ENCODE measurements at regions of chr17 and their contacts with region 1.

Region 1: DNA sequence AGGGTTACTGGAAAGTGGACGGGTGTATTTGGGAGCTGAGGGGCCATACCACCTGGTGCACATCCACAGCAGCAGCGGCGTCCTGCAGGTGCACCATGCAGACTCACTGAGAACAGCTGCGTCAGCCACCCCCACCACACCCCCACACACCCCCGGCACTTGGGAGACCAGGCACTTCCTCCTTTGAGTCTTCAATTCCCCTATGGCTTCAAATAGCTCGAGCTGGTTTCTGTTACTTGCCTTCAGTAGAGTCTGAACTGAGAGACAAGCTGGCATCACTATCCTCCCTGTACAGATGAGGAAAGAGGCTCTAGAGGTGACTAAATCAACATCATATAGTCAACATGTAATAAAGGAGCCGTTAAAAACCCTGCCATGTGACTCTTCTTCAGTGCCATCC is 15.4 kb downstream of the CUEDC1 start:
- DNase-seq: peak; percentile 68
- ATAC-seq: peak; percentile 94
- H3K4me3 Mint-ChIP-seq: peak overlapping the region; percentile 50
- H3K27ac Mint-ChIP-seq: peak overlapping the region; percentile 35
- H3K4me1 Mint-ChIP-seq: peaks cover 34% of the 10 kb centered on the region
- H3K27me3 Mint-ChIP-seq: peaks cover 47% of the 10 kb centered on the region
- CTCF ChIP-seq: no peak

Region 2: DNA sequence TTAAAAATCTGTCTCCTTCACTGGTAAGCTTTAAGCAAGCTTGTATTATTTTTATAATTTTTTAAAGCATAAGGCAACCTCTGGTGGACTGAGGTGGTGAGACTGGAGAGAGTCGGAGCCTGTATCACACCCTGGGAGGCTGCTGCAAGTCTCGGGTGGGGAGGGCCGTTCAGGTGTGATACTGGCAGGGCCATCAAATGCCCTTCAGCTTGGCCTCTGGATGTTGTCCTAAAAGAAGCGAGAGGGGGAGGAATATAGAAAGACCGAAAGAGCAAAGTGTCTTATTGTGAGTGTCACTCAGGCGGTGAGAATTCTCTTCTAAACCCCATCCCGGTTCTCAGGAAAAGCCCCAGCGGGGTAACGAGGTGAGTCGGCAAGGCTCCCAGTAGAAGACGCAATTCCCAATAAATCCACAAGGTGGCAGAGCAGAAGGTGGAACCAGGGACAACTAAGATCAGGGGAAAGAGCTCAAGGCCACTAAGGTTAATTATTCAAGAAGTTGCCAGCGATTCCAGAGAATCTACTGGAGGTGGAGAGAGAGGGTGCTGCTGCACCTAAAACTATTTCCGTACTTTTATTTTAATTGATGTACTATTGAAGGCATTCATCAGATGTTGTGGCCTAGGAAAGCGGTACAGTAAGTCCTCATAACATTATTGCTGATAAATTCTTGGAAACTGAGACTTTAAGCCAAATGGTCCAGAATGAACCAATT is 1120.2 kb before region 1 on chr17:
- CTCF ChIA-PET with region 1: no interaction called
- POLR2A ChIA-PET with region 1: interaction called, 14 read pairs
- intact Hi-C with region 1: no loop called
- DNase-seq: peak; percentile 38
- ATAC-seq: peak; percentile 86
- H3K4me3 Mint-ChIP-seq: no peak overlapping the region
- H3K27ac Mint-ChIP-seq: no peak overlapping the region
- H3K4me1 Mint-ChIP-seq: peaks cover 4% of the 10 kb centered on the region
- H3K27me3 Mint-ChIP-seq: no peaks in the 10 kb centered on the region
- CTCF ChIP-seq: no peak

Region 3: DNA sequence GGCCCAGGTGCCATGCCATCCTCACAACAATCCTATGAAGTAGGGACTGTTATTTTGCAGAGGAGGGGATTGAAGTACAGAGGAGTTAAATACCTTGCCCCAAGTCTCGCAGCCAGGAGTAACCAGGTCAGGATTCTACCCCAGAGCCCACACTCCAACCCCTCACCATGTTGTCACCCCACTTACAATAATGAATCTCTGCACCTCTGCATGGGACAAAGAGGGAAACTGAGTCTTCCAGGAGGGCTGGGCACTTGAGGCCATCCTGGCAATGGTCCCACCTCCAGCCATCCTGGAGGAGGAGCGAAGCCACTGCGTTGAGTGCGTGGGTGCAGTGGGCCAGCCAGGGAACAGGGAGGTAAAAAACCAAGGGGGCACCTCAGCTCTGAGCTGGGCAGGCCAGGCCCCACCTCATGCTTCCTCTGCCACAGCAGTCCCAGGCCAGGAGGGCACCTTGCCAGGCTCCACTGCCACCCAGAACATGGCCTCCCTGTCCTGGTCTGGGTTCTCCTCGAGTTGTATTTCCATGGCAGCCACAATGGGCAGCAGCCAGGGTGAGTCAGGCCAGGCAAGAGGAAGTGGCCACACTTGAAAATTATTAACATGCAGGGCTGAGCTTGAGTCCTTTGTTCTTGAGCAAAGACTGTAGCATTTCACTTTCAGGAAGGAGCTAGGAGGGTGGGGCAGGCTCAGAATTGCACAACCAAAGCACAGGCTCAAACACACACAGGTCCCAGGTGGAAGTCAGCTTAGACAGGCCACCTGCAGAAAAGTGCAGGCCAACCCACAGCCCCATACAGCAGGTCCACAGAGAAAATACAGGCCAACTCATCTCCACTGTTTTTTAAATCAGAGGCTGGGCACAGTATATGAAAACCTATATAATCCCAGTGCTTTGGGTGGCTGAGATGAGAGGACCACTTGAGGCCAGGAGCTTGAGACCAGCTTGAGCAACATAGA is 36.7 kb before region 1 on chr17:
- CTCF ChIA-PET with region 1: no interaction called
- POLR2A ChIA-PET with region 1: interaction called, 10 read pairs
- intact Hi-C with region 1: loop called (anchors 5 kb)
- DNase-seq: no peak
- ATAC-seq: peak; percentile 19
- H3K4me3 Mint-ChIP-seq: peak overlapping the region; percentile 39
- H3K27ac Mint-ChIP-seq: no peak overlapping the region
- H3K4me1 Mint-ChIP-seq: peaks cover 33% of the 10 kb centered on the region
- H3K27me3 Mint-ChIP-seq: peaks cover 14% of the 10 kb centered on the region
- CTCF ChIP-seq: no peak

Region 4: GRCh38 chr17:57955183-57955931 is 15.6 kb after region 1 on chr17 and contains the start of gene CUEDC1:
- CTCF ChIA-PET with region 1: interaction called, 5 read pairs
- POLR2A ChIA-PET with region 1: interaction called, 35 read pairs
- intact Hi-C with region 1: loop called (anchors 1 kb)
- DNase-seq: peak; percentile 62
- ATAC-seq: peak; percentile 76
- H3K4me3 Mint-ChIP-seq: peak within 1 kb of the TSS; percentile 72
- H3K27ac Mint-ChIP-seq: no peak within 1 kb of the TSS
- H3K4me1 Mint-ChIP-seq: peaks cover 32% of the 10 kb centered on the region
- H3K27me3 Mint-ChIP-seq: peaks cover 64% of the 10 kb centered on the region
- CTCF ChIP-seq: no peak
- total RNA-seq, gene CUEDC1: not detected in 2 replicates

Region 5: GRCh38 chr17:58504826-58505521 is 565.2 kb after region 1 on chr17:
- CTCF ChIA-PET with region 1: no interaction called
- POLR2A ChIA-PET with region 1: no interaction called
- intact Hi-C with region 1: no loop called
- DNase-seq: peak; percentile 44
- ATAC-seq: peak; percentile 94
- H3K4me3 Mint-ChIP-seq: peak overlapping the region; percentile 64
- H3K27ac Mint-ChIP-seq: peak overlapping the region; percentile 97
- H3K4me1 Mint-ChIP-seq: peaks cover 28% of the 10 kb centered on the region
- H3K27me3 Mint-ChIP-seq: no peaks in the 10 kb centered on the region
- CTCF ChIP-seq: no peak

Measured in activated B cell treated with CpG ODN at 0.5 μM for 24 hours (primary cell).